MCF 10A (cell line): ENCODE measurements at regions of chr2 and their contacts with region 1.

Region 1: GRCh38 chr2:186503848-186504606 is 18.0 kb downstream of the ZC3H15 start:
- DNase-seq: peak; percentile 35
- H3K4me3 Mint-ChIP-seq: no peak overlapping the region
- H3K27ac Mint-ChIP-seq: no peak overlapping the region
- H3K4me1 Mint-ChIP-seq: peaks cover 9% of the 10 kb centered on the region
- H3K27me3 Mint-ChIP-seq: no peaks in the 10 kb centered on the region
- CTCF ChIP-seq: peak; percentile 42

Region 2: GRCh38 chr2:186216557-186216956 is 287.5 kb before region 1 on chr2:
- CTCF ChIA-PET with region 1: no interaction called
- POLR2A ChIA-PET with region 1: no interaction called
- intact Hi-C with region 1: no loop called
- DNase-seq: no peak
- H3K4me3 Mint-ChIP-seq: no peak overlapping the region
- H3K27ac Mint-ChIP-seq: no peak overlapping the region
- H3K4me1 Mint-ChIP-seq: no peaks in the 10 kb centered on the region
- H3K27me3 Mint-ChIP-seq: no peaks in the 10 kb centered on the region
- CTCF ChIP-seq: no peak

Region 3: GRCh38 chr2:186554850-186555735 is 51.1 kb after region 1 on chr2:
- CTCF ChIA-PET with region 1: interaction called, 10 read pairs
- POLR2A ChIA-PET with region 1: no interaction called
- intact Hi-C with region 1: no loop called
- DNase-seq: no peak
- H3K4me3 Mint-ChIP-seq: no peak overlapping the region
- H3K27ac Mint-ChIP-seq: no peak overlapping the region
- H3K4me1 Mint-ChIP-seq: no peaks in the 10 kb centered on the region
- H3K27me3 Mint-ChIP-seq: no peaks in the 10 kb centered on the region
- CTCF ChIP-seq: no peak

Region 4: GRCh38 chr2:187442378-187442777 is 938.4 kb after region 1 on chr2:
- CTCF ChIA-PET with region 1: no interaction called
- POLR2A ChIA-PET with region 1: no interaction called
- intact Hi-C with region 1: loop called (anchors 10 kb)
- DNase-seq: no peak
- H3K4me3 Mint-ChIP-seq: no peak overlapping the region
- H3K27ac Mint-ChIP-seq: no peak overlapping the region
- H3K4me1 Mint-ChIP-seq: no peaks in the 10 kb centered on the region
- H3K27me3 Mint-ChIP-seq: no peaks in the 10 kb centered on the region
- CTCF ChIP-seq: no peak